ENCODE measurements at regions of chr18 and their contacts with region 1.

Region 1: DNA sequence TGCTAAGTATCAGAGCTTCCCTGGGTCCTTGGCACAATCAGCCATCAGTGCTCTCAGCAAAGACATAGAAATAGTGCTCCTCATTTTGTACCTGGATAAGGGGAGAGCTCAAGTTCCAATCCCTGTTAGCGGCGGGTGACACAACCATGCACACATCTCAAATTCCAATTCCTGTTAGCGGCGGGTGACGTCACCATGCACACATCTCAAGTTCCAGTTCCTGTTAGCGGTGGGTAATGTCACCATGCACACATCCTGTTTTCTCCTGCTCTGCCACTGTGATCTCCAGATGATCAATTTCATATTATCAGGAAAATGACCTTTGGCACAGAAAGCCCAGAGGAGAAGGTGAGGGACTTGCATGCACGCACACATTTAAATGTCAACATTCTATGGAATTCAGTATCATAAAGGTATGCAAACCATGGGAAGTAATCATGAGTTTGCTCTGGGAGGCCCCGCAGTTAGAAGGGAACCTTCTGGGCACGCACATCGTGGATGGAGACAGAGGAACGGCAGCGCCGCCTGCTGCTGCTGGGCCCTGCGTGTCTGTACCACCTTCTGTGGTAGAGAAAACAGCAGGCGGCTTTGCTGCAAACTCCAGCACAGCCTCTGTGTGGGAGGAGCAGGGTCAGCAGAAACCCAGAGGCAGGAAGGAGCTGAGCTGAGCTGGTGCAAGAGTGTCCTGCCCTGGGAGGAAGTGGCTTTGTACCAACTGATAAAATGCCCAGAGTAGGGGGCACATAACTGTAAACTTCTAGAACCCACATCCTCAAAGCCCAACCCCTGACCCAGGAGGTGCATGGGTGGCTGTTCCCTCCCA is 77.8 kb downstream of the MBP start:
- DNase-seq: peak; percentile 92
- H3K4me3 Mint-ChIP-seq: peak overlapping the region; percentile 79
- H3K27ac Mint-ChIP-seq: peak overlapping the region; percentile 94
- H3K4me1 Mint-ChIP-seq: peaks cover 76% of the 10 kb centered on the region
- H3K27me3 Mint-ChIP-seq: no peaks in the 10 kb centered on the region

Region 2: DNA sequence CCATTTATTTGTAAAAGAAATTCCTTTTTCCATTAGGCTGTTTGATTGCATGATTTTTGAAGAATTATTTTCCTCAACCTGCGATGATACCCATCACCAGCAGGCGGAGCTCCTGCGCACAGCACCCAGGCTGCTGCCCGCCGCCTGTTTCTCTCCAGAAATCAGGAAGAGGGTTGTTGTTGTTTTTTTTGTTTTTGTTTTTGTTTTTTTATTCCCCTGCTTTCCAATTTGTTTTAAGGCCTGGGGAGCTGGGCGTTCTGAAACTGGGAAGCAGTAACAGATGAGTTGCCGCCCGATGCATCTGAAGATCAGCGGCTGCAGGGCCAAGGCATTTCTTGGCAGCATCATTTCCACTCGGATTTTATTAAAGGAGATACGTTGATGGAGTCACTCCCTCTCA is 54.3 kb before region 1 on chr18:
- CTCF ChIA-PET with region 1: interaction called, 29 read pairs
- POLR2A ChIA-PET with region 1: interaction called, 8 read pairs
- DNase-seq: peak; percentile 60
- H3K4me3 Mint-ChIP-seq: no peak overlapping the region
- H3K27ac Mint-ChIP-seq: no peak overlapping the region
- H3K4me1 Mint-ChIP-seq: peaks cover 38% of the 10 kb centered on the region
- H3K27me3 Mint-ChIP-seq: peaks cover 5% of the 10 kb centered on the region

Region 3: DNA sequence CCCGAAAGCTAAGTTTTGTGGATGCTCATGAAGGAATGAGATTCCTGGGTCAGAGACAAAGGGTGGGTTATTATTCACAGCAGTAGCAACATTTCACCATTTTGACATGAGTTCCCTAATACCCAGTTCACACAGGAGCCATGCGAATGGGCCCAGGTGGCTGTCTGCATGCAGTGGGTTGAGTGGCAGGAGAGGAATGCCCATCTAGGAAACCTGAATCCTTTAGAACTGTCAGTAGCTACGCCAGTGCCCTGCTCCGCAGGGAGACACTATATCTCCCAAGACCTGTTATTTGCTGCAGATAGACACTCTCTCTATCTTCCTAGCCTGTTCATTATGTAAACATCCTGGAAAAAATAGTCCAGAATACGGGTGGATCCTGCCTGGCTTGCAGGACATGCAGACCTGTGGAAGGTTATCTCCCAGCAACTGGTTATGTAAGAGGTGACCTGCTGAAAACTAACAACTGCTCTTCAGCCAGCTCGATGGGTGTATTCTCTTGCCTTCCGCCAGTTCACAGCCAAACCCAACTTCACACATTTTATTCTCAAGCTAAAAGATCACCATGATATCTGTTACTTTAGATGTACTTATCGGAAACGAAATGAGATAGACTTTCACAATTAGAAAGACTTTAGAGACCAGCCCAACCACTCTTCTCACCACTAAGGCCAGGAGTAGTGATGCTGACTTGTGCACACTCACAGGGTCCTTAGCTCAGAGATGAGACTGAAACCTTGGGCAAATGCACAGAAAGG is 18.7 kb after region 1 on chr18:
- CTCF ChIA-PET with region 1: interaction called, 49 read pairs
- POLR2A ChIA-PET with region 1: interaction called, 170 read pairs
- DNase-seq: peak; percentile 54
- H3K4me3 Mint-ChIP-seq: no peak overlapping the region
- H3K27ac Mint-ChIP-seq: peak overlapping the region; percentile 84
- H3K4me1 Mint-ChIP-seq: peaks cover 86% of the 10 kb centered on the region
- H3K27me3 Mint-ChIP-seq: no peaks in the 10 kb centered on the region

Region 4: GRCh38 chr18:77108001-77108692 is 53.3 kb after region 1 on chr18:
- CTCF ChIA-PET with region 1: interaction called, 4 read pairs
- POLR2A ChIA-PET with region 1: interaction called, 10 read pairs
- DNase-seq: no peak
- H3K4me3 Mint-ChIP-seq: peak overlapping the region; percentile 24
- H3K27ac Mint-ChIP-seq: peak overlapping the region; percentile 80
- H3K4me1 Mint-ChIP-seq: peaks cover 94% of the 10 kb centered on the region
- H3K27me3 Mint-ChIP-seq: no peaks in the 10 kb centered on the region

Region 5: GRCh38 chr18:77132371-77133050 is 77.7 kb after region 1 on chr18 and contains the start of gene MBP:
- CTCF ChIA-PET with region 1: interaction called, 14 read pairs
- POLR2A ChIA-PET with region 1: interaction called, 61 read pairs
- DNase-seq: peak; percentile 80
- H3K4me3 Mint-ChIP-seq: peak within 1 kb of the TSS; percentile 96
- H3K27ac Mint-ChIP-seq: peak within 1 kb of the TSS; percentile 88
- H3K4me1 Mint-ChIP-seq: peaks cover 62% of the 10 kb centered on the region
- H3K27me3 Mint-ChIP-seq: no peaks in the 10 kb centered on the region
- total RNA-seq, gene MBP: 81.4 to 95.3 TPM

Measured in activated CD4-positive, alpha-beta memory T cell treated with anti-CD3 and anti-CD28 coated beads, Interleukin-2, amount 10 ng/mL, durations not matched to agents 7 days and 5 days (primary cell).